ENCODE measurements at regions of chr3 and their contacts with region 1.

Region 1: DNA sequence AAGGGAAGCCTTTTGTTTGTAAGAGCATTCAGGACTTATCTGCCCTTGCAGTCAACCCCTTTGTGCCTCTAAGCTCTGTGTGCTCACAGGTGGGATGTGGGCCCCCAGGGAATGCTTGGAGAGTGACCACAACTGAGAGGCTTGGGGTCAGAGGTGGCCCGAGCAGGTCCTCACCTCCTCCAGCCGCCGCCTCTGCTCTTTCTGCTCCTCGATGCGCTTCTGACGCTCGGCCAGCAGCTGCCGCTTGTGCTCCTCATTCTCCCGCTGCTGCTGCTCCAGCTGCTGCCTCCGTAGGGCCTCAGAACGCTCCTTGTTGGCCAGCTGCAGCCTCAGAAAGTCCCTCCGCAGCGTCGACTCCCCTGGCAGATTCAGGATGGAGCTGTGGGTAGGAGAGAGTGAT is 130.8 kb upstream of the SLC2A2 start:
- DNase-seq: no peak
- CTCF ChIP-seq: no peak

Region 2: DNA sequence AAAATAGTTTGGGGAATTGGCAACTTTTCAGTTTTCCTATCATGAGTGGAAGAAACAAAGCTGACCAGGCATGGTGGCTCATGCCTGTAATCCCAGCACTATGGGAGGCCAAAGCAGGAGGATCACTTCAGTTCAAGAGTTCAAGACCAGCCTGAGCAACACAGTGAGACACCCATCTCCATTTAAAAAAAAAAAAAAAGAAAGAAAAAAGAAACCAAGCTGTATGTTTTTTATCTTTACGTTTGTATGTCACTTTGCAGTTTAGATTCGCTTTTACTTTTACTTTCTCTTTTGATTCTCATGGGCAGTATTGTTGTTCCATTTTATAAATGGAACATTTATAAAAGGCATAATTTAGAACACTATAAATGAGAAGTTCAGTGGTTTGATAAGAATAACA is 334.1 kb after region 1 on chr3:
- in situ Hi-C with region 1: no loop called
- DNase-seq: no peak
- CTCF ChIP-seq: no peak

Region 3: GRCh38 chr3:171566803-171567422 is 409.6 kb after region 1 on chr3:
- in situ Hi-C with region 1: loop called (anchors 10 kb)
- DNase-seq: peak; percentile 51
- CTCF ChIP-seq: peak; percentile 66

Measured in GM13977 (cell line).